ENCODE measurements at regions of chr1 and their contacts with region 1.

Region 1: GRCh38 chr1:1387098-1388077 is 11.7 kb downstream of the CCNL2 start:
- DNase-seq: no peak
- H3K4me3 Mint-ChIP-seq: no peak overlapping the region
- H3K27ac Mint-ChIP-seq: no peak overlapping the region
- H3K4me1 Mint-ChIP-seq: peaks cover 2% of the 10 kb centered on the region
- H3K27me3 Mint-ChIP-seq: no peaks in the 10 kb centered on the region

Region 2: GRCh38 chr1:1318131-1318652 is 69.2 kb before region 1 on chr1:
- CTCF ChIA-PET with region 1: no interaction called
- POLR2A ChIA-PET with region 1: no interaction called
- DNase-seq: no peak
- H3K4me3 Mint-ChIP-seq: no peak overlapping the region
- H3K27ac Mint-ChIP-seq: no peak overlapping the region
- H3K4me1 Mint-ChIP-seq: peaks cover 8% of the 10 kb centered on the region
- H3K27me3 Mint-ChIP-seq: no peaks in the 10 kb centered on the region

Region 3: DNA sequence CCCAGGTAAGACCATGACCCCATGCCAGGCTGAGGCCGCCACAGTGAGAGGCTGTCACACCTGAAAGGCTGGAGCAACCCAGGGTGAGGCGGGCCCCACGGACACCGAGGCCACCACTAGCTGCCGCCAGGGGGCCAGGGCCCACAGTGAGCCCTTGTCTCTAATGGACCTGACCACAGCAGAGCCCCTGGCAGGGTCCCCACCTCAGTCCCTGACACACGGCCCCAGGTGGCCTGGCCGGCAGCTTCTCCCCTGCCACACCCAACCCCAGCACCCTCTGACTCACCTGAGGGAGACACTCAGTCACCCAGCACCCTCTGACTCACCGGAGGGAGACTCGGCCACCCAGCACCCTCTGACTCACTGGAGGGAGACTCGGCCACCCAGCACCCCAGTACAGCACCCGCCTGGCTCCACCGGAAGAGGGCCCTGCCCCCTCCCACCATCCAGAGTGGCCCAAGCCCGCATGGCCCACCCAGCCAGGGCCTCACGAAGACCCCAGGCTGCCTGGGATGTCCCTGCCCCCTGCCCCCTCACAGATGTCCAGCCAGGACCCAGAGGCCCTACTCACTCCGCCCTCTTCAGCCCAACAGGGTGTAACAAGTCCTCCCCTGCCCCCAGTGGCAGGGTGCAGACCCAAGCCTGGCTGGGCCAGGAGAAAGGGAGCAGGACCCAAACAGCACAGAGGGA is 42.6 kb before region 1 on chr1:
- CTCF ChIA-PET with region 1: no interaction called
- POLR2A ChIA-PET with region 1: no interaction called
- DNase-seq: no peak
- H3K4me3 Mint-ChIP-seq: no peak overlapping the region
- H3K27ac Mint-ChIP-seq: no peak overlapping the region
- H3K4me1 Mint-ChIP-seq: peaks cover 11% of the 10 kb centered on the region
- H3K27me3 Mint-ChIP-seq: no peaks in the 10 kb centered on the region

Region 4: GRCh38 chr1:1376551-1377226 is 10.7 kb before region 1 on chr1:
- CTCF ChIA-PET with region 1: interaction called, 10 read pairs
- POLR2A ChIA-PET with region 1: no interaction called
- DNase-seq: no peak
- H3K4me3 Mint-ChIP-seq: peak overlapping the region; percentile 88
- H3K27ac Mint-ChIP-seq: peak overlapping the region; percentile 97
- H3K4me1 Mint-ChIP-seq: peaks cover 31% of the 10 kb centered on the region
- H3K27me3 Mint-ChIP-seq: no peaks in the 10 kb centered on the region

Region 5: GRCh38 chr1:1399187-1399871 is 11.9 kb after region 1 on chr1 and contains the start of gene CCNL2:
- CTCF ChIA-PET with region 1: interaction called, 17 read pairs
- POLR2A ChIA-PET with region 1: no interaction called
- DNase-seq: peak; percentile 99
- H3K4me3 Mint-ChIP-seq: peak within 1 kb of the TSS; percentile 80
- H3K27ac Mint-ChIP-seq: peak within 1 kb of the TSS; percentile 91
- H3K4me1 Mint-ChIP-seq: peaks cover 51% of the 10 kb centered on the region
- H3K27me3 Mint-ChIP-seq: no peaks in the 10 kb centered on the region
- total RNA-seq, gene CCNL2: 122 to 131 TPM

Region 6: GRCh38 chr1:1562556-1563195 is 175.3 kb after region 1 on chr1:
- CTCF ChIA-PET with region 1: no interaction called
- POLR2A ChIA-PET with region 1: no interaction called
- DNase-seq: no peak
- H3K4me3 Mint-ChIP-seq: no peak overlapping the region
- H3K27ac Mint-ChIP-seq: no peak overlapping the region
- H3K4me1 Mint-ChIP-seq: peaks cover 9% of the 10 kb centered on the region
- H3K27me3 Mint-ChIP-seq: no peaks in the 10 kb centered on the region